ENCODE measurements at regions of chr5 and their contacts with region 1.

Region 1: DNA sequence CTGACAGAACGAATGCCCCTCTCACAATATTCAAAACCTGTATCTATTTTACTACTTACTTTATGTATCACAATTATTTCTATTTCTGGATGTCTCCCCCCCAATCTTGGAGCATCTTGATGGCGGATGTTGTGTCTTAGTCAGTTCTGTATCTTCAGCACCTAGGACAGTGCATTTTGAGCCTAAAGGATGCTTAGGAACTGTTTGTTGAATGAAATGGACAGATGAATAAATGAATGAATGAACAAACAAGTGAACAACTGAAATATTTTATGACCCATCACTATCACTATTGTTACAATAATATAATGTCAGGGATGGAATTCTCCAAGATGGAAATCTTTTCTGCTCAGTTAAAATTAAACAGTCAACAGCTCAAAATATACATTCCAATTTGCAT is 295.6 kb downstream of the DNAH5 start:
- DNase-seq: no peak
- ATAC-seq: no peak
- H3K4me3 ChIP-seq: no peak overlapping the region
- H3K27ac ChIP-seq: no peak overlapping the region
- H3K4me1 ChIP-seq: no peaks in the 10 kb centered on the region
- H3K27me3 ChIP-seq: no peaks in the 10 kb centered on the region
- CTCF ChIP-seq: no peak

Region 2: GRCh38 chr5:12230659-12231058 is 1418.2 kb before region 1 on chr5:
- intact Hi-C with region 1: loop called in 1 of 10 experiments (anchors 5 kb)
- DNase-seq: no peak
- ATAC-seq: no peak
- H3K4me3 ChIP-seq: no peak overlapping the region
- H3K27ac ChIP-seq: no peak overlapping the region
- H3K4me1 ChIP-seq: no peaks in the 10 kb centered on the region
- H3K27me3 ChIP-seq: no peaks in the 10 kb centered on the region
- CTCF ChIP-seq: no peak